ENCODE measurements at regions of chr18 and their contacts with region 1.

Region 1: DNA sequence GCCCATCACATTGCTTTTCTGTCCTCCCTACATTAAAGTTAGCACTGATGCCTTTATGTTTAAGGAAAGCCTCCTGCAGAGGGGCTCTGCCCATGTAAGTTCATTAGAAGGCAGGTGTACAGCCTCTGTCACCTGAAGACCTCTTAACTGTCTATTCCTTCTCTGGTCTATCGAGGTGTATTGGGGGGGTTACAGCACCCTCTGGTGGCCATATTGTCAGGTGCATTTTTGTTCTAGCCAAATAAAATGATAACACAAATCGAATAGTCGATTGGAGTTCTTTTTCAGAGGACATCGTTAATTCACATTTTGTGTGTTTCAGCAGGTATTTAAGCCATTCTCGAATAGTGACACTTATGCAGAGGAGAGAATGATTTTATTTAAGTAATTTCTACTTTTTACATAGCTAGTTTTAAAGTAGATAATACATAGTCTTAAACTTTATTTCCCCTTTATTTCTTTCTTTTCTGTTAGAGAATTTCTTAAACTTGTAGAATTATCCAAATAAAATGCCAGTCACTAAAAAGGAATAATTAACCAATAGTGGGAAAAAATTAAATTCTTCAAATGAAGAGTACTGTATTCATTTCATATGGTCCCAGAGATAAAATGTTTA is 136.8 kb downstream of the NEDD4L start:
- DNase-seq: peak; percentile 31
- ATAC-seq: peak; percentile 61
- H3K4me3 Mint-ChIP-seq: no peak overlapping the region
- H3K27ac Mint-ChIP-seq: no peak overlapping the region
- H3K4me1 Mint-ChIP-seq: peaks cover 4% of the 10 kb centered on the region
- H3K27me3 Mint-ChIP-seq: no peaks in the 10 kb centered on the region
- CTCF ChIP-seq: peak; percentile 63

Region 2: DNA sequence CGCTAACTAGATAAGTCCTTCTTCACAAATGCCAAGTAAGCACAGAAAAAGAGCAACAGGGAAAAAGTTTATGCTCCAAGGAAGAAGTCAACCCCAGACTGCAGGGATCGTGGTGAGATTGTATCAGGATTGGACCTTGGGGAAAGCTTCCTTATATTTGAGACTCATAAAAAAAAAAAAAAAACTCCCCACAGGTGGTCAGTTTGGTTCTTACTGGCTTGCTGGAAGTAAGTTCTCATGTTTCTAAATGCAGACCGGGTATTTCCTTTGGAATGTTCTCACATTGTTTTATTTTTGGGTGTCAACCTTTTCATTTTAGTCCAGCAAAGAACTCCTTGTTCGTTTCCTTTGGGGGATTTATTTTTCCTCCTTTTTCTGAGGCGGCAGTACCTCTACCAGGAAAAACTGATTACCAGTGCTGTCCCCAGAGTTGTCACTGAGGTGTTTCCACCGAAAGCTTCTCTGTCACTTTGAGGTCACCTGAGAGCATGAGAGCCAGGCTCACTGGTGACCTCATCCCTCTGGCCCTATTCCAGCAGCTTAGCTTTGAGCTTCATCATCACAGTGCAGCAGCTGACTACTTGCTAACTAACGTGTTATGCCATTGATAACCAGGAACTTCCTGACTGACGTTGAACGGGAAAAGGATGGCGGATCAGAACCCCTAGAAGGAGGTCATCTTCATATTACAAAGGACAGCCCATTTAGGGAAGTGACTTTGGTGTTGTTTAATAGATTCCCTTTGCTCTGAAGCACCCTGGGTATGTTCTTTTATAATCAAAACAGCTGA is 361.0 kb before region 1 on chr18:
- CTCF ChIA-PET with region 1: no interaction called
- POLR2A ChIA-PET with region 1: no interaction called
- intact Hi-C with region 1: no loop called
- DNase-seq: no peak
- ATAC-seq: no peak
- H3K4me3 Mint-ChIP-seq: no peak overlapping the region
- H3K27ac Mint-ChIP-seq: no peak overlapping the region
- H3K4me1 Mint-ChIP-seq: no peaks in the 10 kb centered on the region
- H3K27me3 Mint-ChIP-seq: no peaks in the 10 kb centered on the region
- CTCF ChIP-seq: no peak

Region 3: DNA sequence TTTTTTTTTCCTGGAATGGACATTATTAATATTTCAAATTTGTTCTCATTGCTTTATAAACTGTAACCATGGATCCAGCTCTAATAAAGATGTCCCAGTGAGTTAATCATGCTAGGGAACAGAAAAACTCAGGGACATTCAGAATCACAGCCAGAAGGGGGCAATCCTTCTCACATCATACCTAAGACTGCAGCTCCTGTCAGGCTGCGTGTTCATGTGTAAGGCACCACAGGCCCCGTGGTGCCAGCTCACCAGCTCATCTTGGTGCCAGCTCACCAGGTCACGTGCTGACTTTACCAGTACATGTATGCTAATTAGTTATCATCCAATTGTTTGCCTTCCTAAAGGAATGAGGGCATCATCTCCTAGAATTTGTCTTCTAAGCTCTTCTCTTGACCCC is 221.6 kb before region 1 on chr18:
- CTCF ChIA-PET with region 1: interaction called, 14 read pairs
- POLR2A ChIA-PET with region 1: no interaction called
- intact Hi-C with region 1: loop called (anchors 1 kb)
- DNase-seq: no peak
- ATAC-seq: peak; percentile 88
- H3K4me3 Mint-ChIP-seq: no peak overlapping the region
- H3K27ac Mint-ChIP-seq: no peak overlapping the region
- H3K4me1 Mint-ChIP-seq: no peaks in the 10 kb centered on the region
- H3K27me3 Mint-ChIP-seq: no peaks in the 10 kb centered on the region
- CTCF ChIP-seq: no peak

Region 4: DNA sequence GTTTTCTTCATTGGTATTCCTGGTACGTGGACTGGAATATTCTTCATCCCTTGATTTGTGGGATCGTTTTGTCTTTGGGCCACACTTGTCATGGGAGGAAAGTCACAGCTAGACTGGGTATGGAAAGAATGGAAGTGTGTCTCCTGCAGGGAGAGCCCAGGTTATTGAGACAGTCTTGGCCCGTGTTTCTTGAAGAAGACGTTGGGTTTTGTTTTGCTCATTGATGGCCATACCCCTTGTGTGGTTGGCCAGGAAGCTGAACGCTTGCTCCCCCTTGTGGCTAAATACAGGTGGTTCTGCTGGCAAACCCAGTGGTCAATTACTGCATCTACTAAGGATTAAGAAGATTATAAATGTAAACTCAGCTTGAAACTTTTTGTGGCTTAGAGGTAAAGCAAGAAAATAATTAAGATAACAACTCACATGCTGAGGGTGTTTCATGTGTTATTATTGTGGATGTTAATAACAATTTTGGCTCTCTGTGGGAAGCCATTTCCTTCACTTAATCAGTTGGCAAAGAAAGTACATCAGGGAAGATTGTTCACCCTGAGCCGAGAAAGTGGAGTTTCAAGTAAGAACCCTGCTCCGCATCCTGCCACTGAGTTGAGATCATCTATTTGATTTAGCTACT is 45.0 kb before region 1 on chr18:
- CTCF ChIA-PET with region 1: interaction called, 16 read pairs
- POLR2A ChIA-PET with region 1: no interaction called
- intact Hi-C with region 1: loop called (anchors 1 kb)
- DNase-seq: peak; percentile 25
- ATAC-seq: peak; percentile 65
- H3K4me3 Mint-ChIP-seq: peak overlapping the region; percentile 52
- H3K27ac Mint-ChIP-seq: peak overlapping the region; percentile 3
- H3K4me1 Mint-ChIP-seq: peaks cover 33% of the 10 kb centered on the region
- H3K27me3 Mint-ChIP-seq: no peaks in the 10 kb centered on the region
- CTCF ChIP-seq: no peak

Region 5: GRCh38 chr18:58195278-58195765 is 14.5 kb after region 1 on chr18:
- CTCF ChIA-PET with region 1: interaction called, 10 read pairs
- POLR2A ChIA-PET with region 1: interaction called, 3 read pairs
- intact Hi-C with region 1: no loop called
- DNase-seq: peak; percentile 34
- ATAC-seq: peak; percentile 68
- H3K4me3 Mint-ChIP-seq: peak overlapping the region; percentile 85
- H3K27ac Mint-ChIP-seq: peak overlapping the region; percentile 54
- H3K4me1 Mint-ChIP-seq: peaks cover 25% of the 10 kb centered on the region
- H3K27me3 Mint-ChIP-seq: peaks cover 2% of the 10 kb centered on the region
- CTCF ChIP-seq: no peak

Region 6: GRCh38 chr18:58231930-58232329 is 51.1 kb after region 1 on chr18:
- CTCF ChIA-PET with region 1: no interaction called
- POLR2A ChIA-PET with region 1: no interaction called
- intact Hi-C with region 1: no loop called
- DNase-seq: no peak
- ATAC-seq: peak; percentile 47
- H3K4me3 Mint-ChIP-seq: no peak overlapping the region
- H3K27ac Mint-ChIP-seq: no peak overlapping the region
- H3K4me1 Mint-ChIP-seq: peaks cover 24% of the 10 kb centered on the region
- H3K27me3 Mint-ChIP-seq: no peaks in the 10 kb centered on the region
- CTCF ChIP-seq: no peak

Region 7: GRCh38 chr18:58247363-58247834 is 66.6 kb after region 1 on chr18:
- CTCF ChIA-PET with region 1: no interaction called
- POLR2A ChIA-PET with region 1: no interaction called
- intact Hi-C with region 1: no loop called
- DNase-seq: no peak
- ATAC-seq: no peak
- H3K4me3 Mint-ChIP-seq: no peak overlapping the region
- H3K27ac Mint-ChIP-seq: no peak overlapping the region
- H3K4me1 Mint-ChIP-seq: no peaks in the 10 kb centered on the region
- H3K27me3 Mint-ChIP-seq: no peaks in the 10 kb centered on the region
- CTCF ChIP-seq: no peak

Region 8: DNA sequence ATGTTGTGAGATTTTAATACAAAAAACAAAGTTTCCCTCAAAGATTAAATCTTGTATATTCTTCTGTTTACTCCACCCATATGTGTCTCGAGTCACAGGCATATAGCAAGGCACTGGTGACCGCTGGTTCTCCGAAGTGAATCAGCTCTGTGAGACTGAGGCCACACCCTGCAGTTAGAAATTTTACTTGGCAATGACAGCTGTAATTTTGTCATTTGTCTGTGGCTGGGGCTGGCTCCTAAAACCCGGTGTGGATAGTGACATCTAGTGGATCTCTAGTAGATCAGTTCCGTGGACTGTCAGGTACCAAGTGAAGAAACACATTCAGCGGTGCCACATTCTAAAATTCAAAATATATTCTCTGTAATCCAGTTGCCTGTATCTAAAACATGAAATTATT is 141.1 kb after region 1 on chr18:
- CTCF ChIA-PET with region 1: interaction called, 5 read pairs
- POLR2A ChIA-PET with region 1: no interaction called
- intact Hi-C with region 1: loop called (anchors 1 kb)
- DNase-seq: no peak
- ATAC-seq: peak; percentile 77
- H3K4me3 Mint-ChIP-seq: no peak overlapping the region
- H3K27ac Mint-ChIP-seq: no peak overlapping the region
- H3K4me1 Mint-ChIP-seq: peaks cover 11% of the 10 kb centered on the region
- H3K27me3 Mint-ChIP-seq: no peaks in the 10 kb centered on the region
- CTCF ChIP-seq: no peak

Region 9: GRCh38 chr18:59127047-59127446 is 946.2 kb after region 1 on chr18:
- CTCF ChIA-PET with region 1: no interaction called
- POLR2A ChIA-PET with region 1: no interaction called
- intact Hi-C with region 1: no loop called
- DNase-seq: no peak
- ATAC-seq: no peak
- H3K4me3 Mint-ChIP-seq: no peak overlapping the region
- H3K27ac Mint-ChIP-seq: no peak overlapping the region
- H3K4me1 Mint-ChIP-seq: no peaks in the 10 kb centered on the region
- H3K27me3 Mint-ChIP-seq: peaks cover 21% of the 10 kb centered on the region
- CTCF ChIP-seq: no peak

Measured in activated B cell treated with CpG ODN at 0.5 μM for 24 hours (primary cell).